ENCODE measurements at regions of chr2 and their contacts with region 1.

Region 1: GRCh38 chr2:219402665-219403515 is 15.2 kb upstream of the DNPEP start:
- DNase-seq: peak in 4 of 5 donors; percentile 63 to 75 (median 68)
- ATAC-seq: peak in 1 of 4 donors; percentile 26
- H3K4me3 ChIP-seq: no peak overlapping the region
- H3K27ac ChIP-seq: peak overlapping the region in 7 of 12 donors; percentile 90 to 99 (median 93)
- H3K4me1 ChIP-seq: peaks cover 0 to 48% (median 17%) of the 10 kb centered on the region in 12 donors
- H3K27me3 ChIP-seq: peaks cover 0 to 3% (median 0%) of the 10 kb centered on the region in 9 donors
- CTCF ChIP-seq: peak; percentile 81 to 94 (median 88)
- POLR2A ChIP-seq: no peak

Region 2: DNA sequence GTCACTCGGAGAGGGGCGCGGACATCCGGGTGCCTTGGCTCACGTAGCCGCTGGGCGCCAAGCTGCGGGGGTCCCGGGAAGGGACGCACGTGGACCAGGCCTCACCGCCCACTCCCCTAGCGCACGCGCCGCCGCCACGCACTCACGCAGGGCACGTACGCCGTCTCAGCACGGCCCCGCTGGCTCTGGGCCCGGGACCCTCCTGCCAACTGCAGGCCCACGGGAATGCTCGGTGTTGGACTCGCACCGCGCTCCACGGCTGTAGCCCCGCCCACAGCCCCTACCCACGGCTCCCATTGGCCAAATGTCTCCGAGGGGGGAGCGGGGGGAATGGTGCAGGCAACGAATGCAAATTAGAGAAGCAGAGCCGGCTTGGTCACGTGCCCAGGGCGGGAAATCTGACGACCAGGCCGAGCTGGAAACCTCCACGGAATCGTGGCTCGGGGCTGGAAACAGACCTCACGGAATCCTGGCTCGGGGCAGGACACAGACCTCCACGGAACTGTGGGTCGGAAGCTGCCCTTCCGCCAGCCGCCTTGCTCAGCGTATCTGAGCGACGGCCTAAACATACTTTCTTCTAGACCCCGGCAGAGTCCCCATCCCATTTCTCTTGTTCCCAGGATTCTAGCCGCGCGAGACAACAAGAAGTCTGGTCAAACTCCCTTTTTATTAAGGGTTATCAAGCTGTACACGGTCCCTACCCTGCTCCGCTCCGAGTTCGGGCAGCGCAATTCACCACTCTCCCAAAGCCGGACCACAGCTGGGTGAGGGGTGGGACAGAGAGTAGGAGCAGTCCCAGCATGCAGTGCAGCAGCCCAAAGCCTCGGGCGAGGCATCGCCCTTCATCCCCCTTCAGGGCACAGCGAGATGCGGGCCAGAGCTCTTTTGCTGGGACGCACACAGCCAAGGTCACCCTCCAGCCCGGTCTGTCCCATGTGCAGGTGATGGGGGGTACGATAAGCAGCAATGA is 183.9 kb before region 1 on chr2 and contains the start of gene ABCB6:
- intact Hi-C with region 1: no loop called
- DNase-seq: peak; percentile 97 to 99 (median 98)
- ATAC-seq: peak; percentile 86 to 93 (median 90)
- H3K4me3 ChIP-seq: peak within 1 kb of the TSS; percentile 19 to 66 (median 58)
- H3K27ac ChIP-seq: peak within 1 kb of the TSS; percentile 68 to 97 (median 90)
- H3K4me1 ChIP-seq: peaks cover 6 to 42% (median 33%) of the 10 kb centered on the region in 12 donors
- H3K27me3 ChIP-seq: no peaks in the 10 kb centered on the region
- CTCF ChIP-seq: no peak
- POLR2A ChIP-seq: peak; percentile 7 to 84
- total RNA-seq, gene ABCB6: 12.1 to 28.1 (median 17.9) TPM

Region 3: DNA sequence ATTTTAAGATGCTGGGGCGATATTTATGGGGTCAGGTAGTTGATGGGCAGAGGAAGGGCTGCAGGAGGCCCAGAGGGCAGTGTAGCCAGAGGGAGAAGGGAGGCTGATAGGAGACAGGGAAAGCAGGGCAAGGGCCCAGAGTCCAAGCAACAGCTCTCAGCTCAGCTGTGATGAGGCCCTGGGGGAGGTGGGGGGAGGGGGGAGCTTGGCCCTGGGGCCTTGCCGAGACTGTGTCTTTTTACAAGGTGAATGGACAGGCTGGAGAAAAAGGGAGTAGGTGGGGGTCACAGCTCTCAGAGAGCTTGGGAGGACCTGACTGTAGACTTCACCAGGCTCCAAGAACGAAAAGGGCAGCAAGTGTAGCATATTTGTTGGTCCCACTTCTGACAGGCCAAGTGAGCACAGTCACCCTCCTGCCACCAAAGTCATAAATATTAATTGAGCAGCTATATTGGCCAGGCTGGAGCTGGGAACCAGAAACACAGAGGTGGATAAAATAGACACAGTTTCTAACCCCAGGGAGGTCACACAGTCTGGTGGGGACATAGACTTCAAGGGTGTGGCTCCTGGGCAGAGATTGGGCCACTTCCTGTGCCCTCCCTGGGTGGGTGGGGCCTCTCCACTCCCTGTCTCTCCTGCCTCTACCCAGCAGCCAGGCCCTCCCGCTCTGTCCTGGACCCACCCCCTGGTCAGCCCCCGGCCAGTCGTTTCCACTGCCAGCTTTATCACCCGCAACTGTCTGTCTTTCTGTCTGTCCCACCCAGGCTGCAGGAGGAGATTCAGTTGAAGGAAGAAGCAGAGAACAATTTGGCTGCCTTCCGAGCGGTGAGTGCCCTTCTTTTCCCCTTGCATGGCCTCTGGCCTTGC is 16.7 kb after region 1 on chr2:
- intact Hi-C with region 1: loop called in 2 of 10 experiments (anchors 1 to 2 kb)
- DNase-seq: peak in 4 of 5 donors; percentile 78 to 82 (median 80)
- ATAC-seq: peak; percentile 40 to 72 (median 63)
- H3K4me3 ChIP-seq: peak overlapping the region; percentile 49 to 80 (median 63)
- H3K27ac ChIP-seq: peak overlapping the region; percentile 88 to 99 (median 96)
- H3K4me1 ChIP-seq: peaks cover 0 to 39% (median 10%) of the 10 kb centered on the region in 12 donors
- H3K27me3 ChIP-seq: peaks cover 0 to 21% (median 15%) of the 10 kb centered on the region in 9 donors
- CTCF ChIP-seq: no peak
- POLR2A ChIP-seq: peak; percentile 29 to 51

Region 4: DNA sequence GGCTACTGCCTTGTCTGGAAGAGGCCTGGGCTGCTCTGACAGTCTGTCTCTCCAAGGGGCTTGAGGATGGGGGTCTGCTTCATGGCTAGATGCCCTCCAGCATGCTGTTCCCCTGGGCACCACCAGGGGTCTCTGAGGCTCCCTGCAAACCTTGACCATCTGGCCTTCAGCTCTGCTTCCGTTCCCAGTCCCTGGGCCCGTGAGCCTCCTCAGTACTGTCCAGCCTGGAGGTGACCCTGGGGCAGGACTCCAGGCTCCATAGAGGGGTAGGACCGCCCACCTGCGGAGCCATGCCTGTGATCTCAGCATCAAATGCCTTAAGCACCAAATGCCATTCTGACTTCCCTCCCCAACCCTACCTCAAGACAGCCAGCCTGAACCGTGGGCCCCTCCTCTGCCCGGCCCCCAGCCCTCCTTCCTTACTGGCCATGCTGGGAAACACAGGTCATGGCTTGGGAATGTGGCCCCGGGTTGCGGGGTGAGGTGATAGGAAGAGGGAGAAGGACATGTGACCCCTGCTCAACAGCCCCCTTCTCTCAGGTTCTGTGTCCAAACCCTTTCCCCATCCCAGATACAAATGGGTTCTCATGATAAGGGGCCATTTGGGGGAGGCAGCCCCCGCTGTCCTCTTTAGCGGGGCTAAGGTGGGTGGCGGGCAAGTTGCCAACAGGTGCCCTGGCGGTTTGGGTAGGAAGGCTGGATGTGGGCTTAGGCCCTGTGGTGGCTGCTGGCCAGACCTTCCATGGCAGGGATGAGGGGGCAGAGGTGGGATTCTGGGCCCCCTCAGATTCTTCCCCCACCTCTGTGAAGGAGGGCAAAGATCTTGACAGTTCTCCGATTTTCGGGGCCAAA is 56.8 kb after region 1 on chr2:
- intact Hi-C with region 1: loop called in 3 of 10 experiments (anchors 2 to 10 kb)
- DNase-seq: peak; percentile 68 to 82 (median 78)
- ATAC-seq: peak; percentile 49 to 69 (median 64)
- H3K4me3 ChIP-seq: peak overlapping the region in 1 of 12 donors; percentile 17
- H3K27ac ChIP-seq: peak overlapping the region; percentile 66 to 99 (median 92)
- H3K4me1 ChIP-seq: peaks cover 0 to 68% (median 12%) of the 10 kb centered on the region in 12 donors
- H3K27me3 ChIP-seq: peaks cover 0 to 9% (median 0%) of the 10 kb centered on the region in 9 donors
- CTCF ChIP-seq: peak; percentile 77 to 90 (median 86)
- POLR2A ChIP-seq: no peak

Region 5: DNA sequence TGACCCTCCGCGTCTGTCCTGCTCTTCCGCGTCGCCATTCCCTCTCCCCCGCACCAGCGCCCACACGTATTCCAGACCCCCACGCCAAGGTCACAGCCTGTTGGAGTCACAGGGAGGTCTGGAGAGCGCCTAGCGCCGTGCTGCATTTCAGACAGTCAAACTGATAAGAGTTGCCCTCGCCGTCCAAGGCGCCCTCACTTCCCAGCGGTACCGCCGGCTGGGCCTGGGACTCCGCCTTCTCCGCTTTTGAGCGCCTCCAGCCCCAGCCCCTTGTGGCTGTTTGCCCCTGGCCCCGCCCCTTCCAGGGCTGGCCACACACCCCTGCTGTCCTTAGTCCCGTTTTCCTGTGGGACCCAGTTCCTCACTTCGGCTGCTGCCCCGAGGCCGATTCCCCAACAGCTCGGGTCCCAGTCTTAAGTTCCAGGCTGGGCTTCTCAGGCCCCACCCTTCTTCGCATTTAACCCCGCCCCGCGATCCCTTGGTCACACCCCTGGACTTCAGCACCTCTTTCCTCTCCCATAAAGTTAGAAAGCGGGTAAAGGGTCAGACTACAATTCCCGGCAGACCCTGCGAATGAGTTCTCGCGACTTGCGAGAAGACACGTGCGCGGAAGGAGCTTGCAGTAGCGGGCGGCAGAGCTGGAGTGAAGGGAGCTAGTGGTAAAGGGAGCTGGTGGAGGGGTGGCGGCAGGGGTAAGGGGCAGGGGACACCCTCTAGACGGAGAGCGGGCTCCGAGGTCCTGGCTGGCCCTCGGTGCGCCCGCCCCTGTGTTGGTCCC is 95.6 kb after region 1 on chr2 and contains the start of gene GMPPA:
- intact Hi-C with region 1: no loop called
- DNase-seq: peak; percentile 96 to 98 (median 96)
- ATAC-seq: peak; percentile 86 to 94 (median 88)
- H3K4me3 ChIP-seq: peak within 1 kb of the TSS; percentile 38 to 89 (median 78)
- H3K27ac ChIP-seq: peak within 1 kb of the TSS; percentile 94 to 100 (median 98)
- H3K4me1 ChIP-seq: peaks cover 0 to 50% (median 35%) of the 10 kb centered on the region in 12 donors
- H3K27me3 ChIP-seq: peaks cover 0 to 37% (median 0%) of the 10 kb centered on the region in 9 donors
- CTCF ChIP-seq: peak in 1 of 12 donors; percentile 31
- POLR2A ChIP-seq: peak in 1 of 2 donors; percentile 61
- total RNA-seq, gene GMPPA: 15.8 to 31.6 (median 20.1) TPM

Region 6: DNA sequence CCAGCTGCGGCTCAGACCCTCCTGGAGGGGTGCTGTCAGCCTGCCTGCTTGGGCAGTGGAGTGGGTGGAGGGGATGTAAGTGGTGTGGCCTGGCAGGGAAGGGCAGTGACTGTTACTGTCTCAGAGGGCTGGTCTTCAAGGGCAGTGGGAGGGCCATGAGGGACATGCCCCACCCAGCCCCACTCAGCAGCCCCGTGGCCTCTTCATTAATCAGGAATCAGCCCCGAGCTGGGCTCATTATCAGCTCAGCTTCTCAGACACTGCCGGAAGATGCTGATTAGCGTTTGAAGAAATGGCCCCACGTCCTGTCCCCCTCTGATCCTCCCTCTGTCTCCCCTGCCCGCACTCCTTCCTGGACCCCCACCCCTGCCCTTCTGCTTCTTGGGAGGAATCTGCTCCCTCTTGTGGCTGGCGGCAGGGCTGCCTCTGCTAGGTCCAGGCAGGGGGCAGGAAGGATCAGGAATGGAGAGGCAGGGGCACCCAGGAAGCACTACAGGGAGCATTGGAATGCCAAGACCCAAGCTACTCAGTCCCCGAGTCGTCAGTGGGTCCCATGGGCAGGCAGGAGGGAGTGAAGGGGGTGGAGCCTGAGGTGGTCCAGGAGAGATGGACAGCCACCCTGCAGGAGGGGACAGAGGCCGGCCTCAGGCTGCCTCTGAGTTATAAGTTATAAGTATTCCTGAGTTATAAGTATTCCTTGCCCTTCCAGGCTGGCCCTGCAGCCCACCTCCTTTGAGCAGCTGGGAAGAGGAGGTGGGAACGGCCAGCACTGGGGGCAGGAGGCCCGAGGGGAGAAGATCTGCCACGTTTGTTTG is 118.4 kb after region 1 on chr2:
- intact Hi-C with region 1: loop called in 1 of 10 experiments (anchors 2 kb)
- DNase-seq: peak in 2 of 5 donors; percentile 48 to 56
- ATAC-seq: peak; percentile 47 to 70 (median 66)
- H3K4me3 ChIP-seq: peak overlapping the region in 1 of 12 donors; percentile 11
- H3K27ac ChIP-seq: peak overlapping the region in 10 of 12 donors; percentile 15 to 80 (median 54)
- H3K4me1 ChIP-seq: peaks cover 0 to 44% (median 18%) of the 10 kb centered on the region in 12 donors
- H3K27me3 ChIP-seq: peaks cover 8 to 64% (median 18%) of the 10 kb centered on the region in 9 donors
- CTCF ChIP-seq: peak; percentile 25 to 69 (median 56)
- POLR2A ChIP-seq: no peak

Region 7: GRCh38 chr2:219537657-219538488 is 135.0 kb after region 1 on chr2:
- intact Hi-C with region 1: loop called in 2 of 10 experiments (anchors 2 to 5 kb)
- DNase-seq: no peak
- ATAC-seq: no peak
- H3K4me3 ChIP-seq: no peak overlapping the region
- H3K27ac ChIP-seq: peak overlapping the region in 2 of 12 donors; percentile 29
- H3K4me1 ChIP-seq: peaks cover 0 to 36% (median 18%) of the 10 kb centered on the region in 12 donors
- H3K27me3 ChIP-seq: peaks cover 0 to 12% (median 2%) of the 10 kb centered on the region in 9 donors
- CTCF ChIP-seq: no peak
- POLR2A ChIP-seq: no peak

Measured in heart left ventricle (tissue), 16 donors.